ENCODE measurements at regions of chr5 and their contacts with region 1.

Region 1: DNA sequence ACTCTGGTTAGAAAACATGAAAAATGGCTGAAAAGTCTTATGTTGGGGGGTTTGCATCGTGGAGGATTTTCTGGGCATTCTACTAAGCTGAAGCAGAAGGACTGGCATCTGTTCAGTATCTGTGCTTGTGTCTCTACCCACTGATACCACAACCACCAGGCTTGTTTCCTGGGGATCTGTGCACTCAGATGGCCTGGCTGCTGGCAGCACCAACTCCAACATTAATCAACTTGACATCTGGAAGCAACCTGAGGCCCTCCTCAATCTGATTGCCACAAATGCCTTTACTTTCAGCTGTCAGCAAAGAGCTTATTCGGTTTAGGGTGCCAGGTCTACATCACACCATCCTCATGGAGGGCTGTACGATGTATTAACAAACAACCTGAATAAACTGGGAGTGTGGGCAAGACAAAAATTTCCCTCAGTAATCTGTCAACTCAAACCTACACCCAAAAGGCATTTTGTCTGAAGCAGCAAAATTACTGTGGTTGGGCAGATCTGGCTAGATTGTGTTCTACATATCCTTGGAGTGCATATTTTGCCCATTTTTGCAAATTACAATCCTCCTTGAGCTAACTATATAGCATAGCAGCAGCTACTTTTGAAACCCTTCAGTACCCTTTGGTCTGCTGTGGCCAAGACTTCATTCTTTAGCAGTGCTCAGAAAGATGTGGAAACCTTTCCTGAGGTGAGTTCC is 74.6 kb downstream of the FOXD1 start:
- DNase-seq: no peak
- H3K4me3 ChIP-seq: no peak overlapping the region
- H3K27ac ChIP-seq: no peak overlapping the region
- H3K4me1 ChIP-seq: no peaks in the 10 kb centered on the region
- H3K27me3 ChIP-seq: no peaks in the 10 kb centered on the region
- CTCF ChIP-seq: no peak
- POLR2A ChIP-seq: no peak

Region 2: GRCh38 chr5:73354406-73354805 is 19.6 kb before region 1 on chr5:
- intact Hi-C with region 1: loop called (anchors 2 kb)
- DNase-seq: no peak
- H3K4me3 ChIP-seq: no peak overlapping the region
- H3K27ac ChIP-seq: no peak overlapping the region
- H3K4me1 ChIP-seq: no peaks in the 10 kb centered on the region
- H3K27me3 ChIP-seq: no peaks in the 10 kb centered on the region
- CTCF ChIP-seq: no peak
- POLR2A ChIP-seq: no peak

Region 3: DNA sequence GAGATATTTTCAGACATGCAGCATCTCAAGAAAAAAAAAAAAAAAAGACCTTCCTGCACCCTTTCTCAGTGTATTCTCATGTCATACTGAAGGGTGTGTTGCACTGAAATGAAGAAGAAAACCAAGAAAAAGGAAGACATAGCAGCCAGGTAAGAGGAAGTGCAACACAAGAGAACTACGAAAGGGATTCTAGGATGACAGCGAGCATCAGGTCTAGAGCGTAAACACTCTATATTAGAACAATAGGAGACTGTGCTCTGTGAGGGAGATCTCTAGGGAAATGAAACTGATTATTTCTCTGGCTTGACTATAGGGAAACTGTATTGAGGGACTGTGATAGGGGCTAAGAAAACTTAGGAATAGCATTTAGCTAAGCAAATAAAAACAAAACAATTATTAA is 154.3 kb after region 1 on chr5:
- intact Hi-C with region 1: no loop called
- DNase-seq: no peak
- H3K4me3 ChIP-seq: no peak overlapping the region
- H3K27ac ChIP-seq: no peak overlapping the region
- H3K4me1 ChIP-seq: no peaks in the 10 kb centered on the region
- H3K27me3 ChIP-seq: no peaks in the 10 kb centered on the region
- CTCF ChIP-seq: no peak
- POLR2A ChIP-seq: no peak